ENCODE measurements at regions of chr4 and their contacts with region 1.

Region 1: DNA sequence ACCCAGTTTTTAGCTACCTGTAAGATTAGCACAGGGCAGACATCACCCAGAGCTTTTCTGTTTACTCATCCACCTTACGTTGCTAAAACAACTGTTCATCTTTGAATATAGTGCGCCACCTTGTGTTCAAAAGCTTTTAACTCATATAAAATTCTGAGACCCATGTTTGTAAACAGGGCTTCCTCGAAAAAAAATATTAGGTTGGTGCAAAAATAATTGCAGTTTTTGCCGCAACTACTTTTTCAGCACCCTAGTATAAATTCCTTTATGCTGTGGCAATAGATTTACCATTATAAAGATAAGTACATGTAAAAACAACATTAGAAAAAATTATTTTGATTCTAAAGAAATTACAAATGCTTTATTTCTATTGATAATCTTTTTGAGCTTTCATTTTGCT is 147.9 kb downstream of the LRBA start:
- DNase-seq: no peak
- H3K4me3 ChIP-seq: no peak overlapping the region
- H3K27ac ChIP-seq: no peak overlapping the region
- H3K4me1 ChIP-seq: no peaks in the 10 kb centered on the region
- H3K27me3 ChIP-seq: no peaks in the 10 kb centered on the region
- CTCF ChIP-seq: peak; percentile 59 to 63 (median 62)
- EP300 ChIP-seq: no peak
- POLR2A ChIP-seq: no peak

Region 2: DNA sequence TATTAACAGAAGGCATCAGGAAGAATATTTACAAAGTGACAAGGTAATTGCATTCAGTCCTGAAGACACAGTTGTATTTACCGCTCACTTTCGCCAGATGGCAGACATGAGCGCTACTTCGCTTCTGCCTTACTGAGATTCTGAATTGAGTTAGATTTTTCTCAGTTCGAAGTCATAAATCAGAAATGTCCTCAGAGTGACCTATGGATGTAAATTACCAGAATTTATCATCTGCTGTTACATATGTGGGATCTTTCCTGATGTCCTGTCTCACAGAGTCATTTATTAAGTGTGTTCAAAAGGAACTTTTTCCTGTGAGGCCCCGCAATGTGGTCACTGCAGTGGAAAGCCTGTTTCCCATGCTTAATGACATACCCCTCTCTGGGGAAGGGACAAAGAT is 886.2 kb before region 1 on chr4:
- intact Hi-C with region 1: loop called (anchors 5 kb)
- DNase-seq: no peak
- H3K4me3 ChIP-seq: no peak overlapping the region
- H3K27ac ChIP-seq: no peak overlapping the region
- H3K4me1 ChIP-seq: no peaks in the 10 kb centered on the region
- H3K27me3 ChIP-seq: no peaks in the 10 kb centered on the region
- CTCF ChIP-seq: peak; percentile 66 to 80 (median 71)
- EP300 ChIP-seq: no peak
- POLR2A ChIP-seq: no peak

Region 3: DNA sequence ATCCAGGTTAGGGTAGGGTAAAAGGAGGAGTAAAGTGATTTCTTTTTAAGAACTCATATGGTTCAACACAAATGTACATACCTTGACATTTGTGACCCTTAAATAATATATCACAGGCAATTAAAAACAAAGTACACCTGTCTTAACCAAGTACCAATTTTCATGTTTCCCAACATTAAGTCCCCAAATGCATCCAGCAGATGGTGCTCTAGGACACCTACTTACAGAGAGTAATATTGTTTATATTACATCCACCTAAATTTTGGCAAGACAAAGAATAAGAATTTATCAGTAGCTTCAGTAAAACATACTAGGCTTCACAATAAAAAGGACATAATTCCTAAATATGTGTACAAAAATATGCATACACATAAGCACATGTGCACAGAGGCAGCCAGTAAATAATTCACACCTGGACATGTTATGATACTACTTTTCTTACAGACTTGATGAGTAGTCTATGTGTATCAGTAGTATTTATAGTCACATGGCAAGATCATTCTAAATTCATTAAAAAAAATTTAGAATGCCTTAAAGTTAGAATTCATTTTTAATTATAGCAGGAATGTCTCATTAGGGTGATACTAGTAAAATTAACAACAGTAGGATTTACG is 569.2 kb before region 1 on chr4:
- intact Hi-C with region 1: loop called (anchors 10 kb)
- DNase-seq: no peak
- H3K4me3 ChIP-seq: no peak overlapping the region
- H3K27ac ChIP-seq: no peak overlapping the region
- H3K4me1 ChIP-seq: no peaks in the 10 kb centered on the region
- H3K27me3 ChIP-seq: no peaks in the 10 kb centered on the region
- CTCF ChIP-seq: peak; percentile 62 to 65 (median 63)
- EP300 ChIP-seq: no peak
- POLR2A ChIP-seq: no peak

Region 4: DNA sequence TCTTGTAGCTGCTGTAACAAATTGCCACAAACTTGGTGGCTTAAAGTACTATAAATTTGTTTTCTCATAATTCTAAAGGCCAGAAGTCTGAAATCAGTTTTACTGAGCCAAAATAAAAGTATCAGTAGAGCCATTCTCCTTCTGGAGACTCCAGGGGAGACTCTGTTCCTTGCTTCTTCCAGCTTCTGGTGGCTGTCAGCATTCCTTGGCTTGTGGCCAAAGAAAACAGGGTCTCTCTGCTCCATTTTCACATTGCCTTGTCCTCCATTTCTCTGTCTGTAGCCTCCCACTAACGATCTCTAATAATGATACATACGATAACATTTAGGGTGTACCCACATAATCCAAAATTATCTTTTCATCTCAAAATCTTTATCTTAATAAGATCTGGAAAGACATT is 84.8 kb before region 1 on chr4:
- intact Hi-C with region 1: no loop called
- DNase-seq: no peak
- H3K4me3 ChIP-seq: no peak overlapping the region
- H3K27ac ChIP-seq: no peak overlapping the region
- H3K4me1 ChIP-seq: peaks cover 0 to 5% (median 0%) of the 10 kb centered on the region in 4 donors
- H3K27me3 ChIP-seq: no peaks in the 10 kb centered on the region
- CTCF ChIP-seq: no peak
- EP300 ChIP-seq: no peak
- POLR2A ChIP-seq: no peak